ENCODE measurements at regions of chr12 and their contacts with region 1.

Region 1: GRCh38 chr12:68807576-68808387 is at the start of gene MDM2:
- DNase-seq: peak; percentile 97
- ATAC-seq: peak; percentile 89
- H3K4me3 Mint-ChIP-seq: peak within 1 kb of the TSS; percentile 91
- H3K27ac Mint-ChIP-seq: peak within 1 kb of the TSS; percentile 100
- H3K4me1 Mint-ChIP-seq: peaks cover 36% of the 10 kb centered on the region
- H3K27me3 Mint-ChIP-seq: no peaks in the 10 kb centered on the region
- total RNA-seq, gene MDM2: 213 to 234 TPM

Region 2: DNA sequence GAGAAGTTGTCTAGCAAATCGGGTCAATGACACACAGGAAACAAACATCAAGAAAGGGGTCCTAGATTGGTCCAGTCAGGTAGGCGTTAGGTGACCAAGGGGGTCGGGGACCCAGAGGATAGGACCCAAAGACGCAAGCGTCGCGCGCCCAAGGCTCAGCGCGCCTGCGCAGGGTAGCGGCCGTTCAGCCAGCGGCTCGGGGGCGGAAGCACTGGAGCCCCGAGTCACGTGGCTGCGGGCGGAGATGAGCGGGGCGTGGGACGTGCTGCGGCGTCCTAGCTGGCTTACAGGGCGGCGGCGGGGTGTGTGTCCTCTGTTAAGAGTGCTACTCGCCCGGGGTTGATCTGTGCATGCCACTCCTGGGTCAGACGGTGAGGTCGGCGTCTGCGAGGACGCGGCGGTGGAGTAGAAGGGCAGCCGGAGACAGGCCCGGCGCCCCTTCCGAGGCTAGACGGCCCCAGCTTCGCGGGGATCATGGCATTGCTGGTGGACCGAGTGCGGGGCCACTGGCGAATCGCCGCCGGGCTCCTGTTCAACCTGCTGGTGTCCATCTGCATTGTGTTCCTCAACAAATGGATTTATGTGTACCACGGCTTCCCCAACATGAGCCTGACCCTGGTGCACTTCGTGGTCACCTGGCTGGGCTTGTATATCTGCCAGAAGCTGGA is 61.7 kb before region 1 on chr12 and contains the start of gene SLC35E3:
- CTCF ChIA-PET with region 1: interaction called, 22 read pairs
- POLR2A ChIA-PET with region 1: interaction called, 42 read pairs
- DNase-seq: peak; percentile 96
- ATAC-seq: peak; percentile 99
- H3K4me3 Mint-ChIP-seq: peak within 1 kb of the TSS; percentile 98
- H3K27ac Mint-ChIP-seq: peak within 1 kb of the TSS; percentile 91
- H3K4me1 Mint-ChIP-seq: peaks cover 42% of the 10 kb centered on the region
- H3K27me3 Mint-ChIP-seq: no peaks in the 10 kb centered on the region
- total RNA-seq, gene SLC35E3: 9.6 to 9.8 TPM

Region 3: GRCh38 chr12:68794653-68795251 is 13.0 kb before region 1 on chr12:
- CTCF ChIA-PET with region 1: interaction called, 10 read pairs
- POLR2A ChIA-PET with region 1: interaction called, 7 read pairs
- DNase-seq: no peak
- ATAC-seq: no peak
- H3K4me3 Mint-ChIP-seq: no peak overlapping the region
- H3K27ac Mint-ChIP-seq: no peak overlapping the region
- H3K4me1 Mint-ChIP-seq: no peaks in the 10 kb centered on the region
- H3K27me3 Mint-ChIP-seq: no peaks in the 10 kb centered on the region

Region 4: DNA sequence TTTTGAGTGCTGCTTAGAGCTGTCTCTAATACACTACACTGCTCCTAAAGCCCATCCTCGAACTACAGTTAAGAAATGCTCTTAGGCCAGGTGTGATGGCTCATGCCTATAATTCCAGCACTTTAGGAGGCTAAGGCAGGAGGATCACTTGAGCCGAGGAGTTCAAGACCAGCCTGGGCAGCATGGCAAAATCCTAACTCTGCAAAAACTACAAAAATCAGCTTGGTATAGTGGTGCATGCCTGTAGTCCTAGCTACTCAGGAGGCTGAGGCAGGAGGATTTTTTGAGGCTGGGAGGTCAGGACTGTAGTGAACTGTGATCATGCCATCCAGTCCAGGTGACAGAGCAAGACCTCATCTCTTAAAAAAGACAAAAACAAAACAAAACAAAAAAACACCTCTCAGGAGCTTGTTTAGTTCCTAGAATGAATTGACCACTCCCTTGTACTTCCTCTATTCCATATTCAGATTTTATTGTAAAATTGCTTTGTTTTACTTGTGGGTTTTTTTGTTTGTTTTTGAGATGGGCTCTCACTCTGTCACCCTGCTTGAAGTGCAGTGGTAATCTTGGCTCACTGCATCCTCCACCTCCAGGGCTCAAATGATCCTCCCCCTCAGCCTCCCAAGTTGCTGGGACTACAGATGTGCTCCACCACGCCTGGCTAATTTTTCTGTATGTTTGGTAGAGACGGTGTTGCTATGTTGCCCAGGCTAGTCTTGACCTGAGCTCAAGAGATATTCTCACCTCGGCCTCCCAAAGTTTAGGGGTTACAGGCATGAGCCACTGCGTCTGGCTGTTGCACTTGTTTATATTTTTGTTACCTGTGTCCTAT is 13.8 kb after region 1 on chr12:
- CTCF ChIA-PET with region 1: interaction called, 15 read pairs
- POLR2A ChIA-PET with region 1: interaction called, 15 read pairs
- DNase-seq: no peak
- ATAC-seq: peak; percentile 28
- H3K4me3 Mint-ChIP-seq: no peak overlapping the region
- H3K27ac Mint-ChIP-seq: peak overlapping the region; percentile 58
- H3K4me1 Mint-ChIP-seq: peaks cover 30% of the 10 kb centered on the region
- H3K27me3 Mint-ChIP-seq: no peaks in the 10 kb centered on the region

Region 5: GRCh38 chr12:68831272-68831671 is 23.5 kb after region 1 on chr12:
- CTCF ChIA-PET with region 1: interaction called, 22 read pairs
- POLR2A ChIA-PET with region 1: interaction called, 4 read pairs
- DNase-seq: no peak
- ATAC-seq: no peak
- H3K4me3 Mint-ChIP-seq: no peak overlapping the region
- H3K27ac Mint-ChIP-seq: no peak overlapping the region
- H3K4me1 Mint-ChIP-seq: peaks cover 9% of the 10 kb centered on the region
- H3K27me3 Mint-ChIP-seq: no peaks in the 10 kb centered on the region

Measured in activated CD8-positive, alpha-beta T cell treated with anti-CD3 and anti-CD28 coated beads, Interleukin-2, amount 10 ng/mL, durations not matched to agents 7 days and 5 days (primary cell).